Mammary epithelial cell (primary cell): ENCODE measurements at regions of chr10 and their contacts with region 1.

Region 1: GRCh38 chr10:106619346-106619745 is 545.2 kb downstream of the SORCS1 start:
- DNase-seq: no peak
- H3K4me3 ChIP-seq: no peak overlapping the region
- H3K27ac ChIP-seq: no peak overlapping the region
- H3K4me1 ChIP-seq: peaks cover 6% of the 10 kb centered on the region
- H3K27me3 ChIP-seq: no peaks in the 10 kb centered on the region
- CTCF ChIP-seq: no peak

Region 2: GRCh38 chr10:106401161-106401560 is 218.2 kb before region 1 on chr10:
- CTCF ChIA-PET with region 1: no interaction called
- dilution Hi-C with region 1: no loop called
- in situ Hi-C with region 1: no loop called
- intact Hi-C with region 1: loop called (anchors 1 kb)
- DNase-seq: peak; percentile 26
- H3K4me3 ChIP-seq: no peak overlapping the region
- H3K27ac ChIP-seq: no peak overlapping the region
- H3K4me1 ChIP-seq: peaks cover 10% of the 10 kb centered on the region
- H3K27me3 ChIP-seq: no peaks in the 10 kb centered on the region
- CTCF ChIP-seq: peak; percentile 40 to 54